PC-9 (cell line): ENCODE measurements at regions of chr13 and their contacts with region 1.

Region 1: GRCh38 chr13:94849254-94849653 is 136.9 kb upstream of the SOX21 start:
- DNase-seq: no peak
- H3K4me3 ChIP-seq: no peak overlapping the region
- H3K27ac ChIP-seq: no peak overlapping the region
- H3K4me1 ChIP-seq: no peaks in the 10 kb centered on the region
- H3K27me3 ChIP-seq: peaks cover 5% of the 10 kb centered on the region; the same call in 1 of the 2 replicates
- CTCF ChIP-seq: no peak

Region 2: GRCh38 chr13:94050686-94051085 is 798.6 kb before region 1 on chr13:
- CTCF ChIA-PET with region 1: no interaction called
- POLR2A ChIA-PET with region 1: no interaction called
- intact Hi-C with region 1: no loop called
- DNase-seq: no peak
- H3K4me3 ChIP-seq: no peak overlapping the region
- H3K27ac ChIP-seq: no peak overlapping the region
- H3K4me1 ChIP-seq: no peaks in the 10 kb centered on the region
- H3K27me3 ChIP-seq: no peaks in the 10 kb centered on the region
- CTCF ChIP-seq: no peak

Region 3: GRCh38 chr13:94886191-94886590 is 36.9 kb after region 1 on chr13:
- CTCF ChIA-PET with region 1: no interaction called
- POLR2A ChIA-PET with region 1: no interaction called
- intact Hi-C with region 1: no loop called
- DNase-seq: no peak
- H3K4me3 ChIP-seq: no peak overlapping the region
- H3K27ac ChIP-seq: no peak overlapping the region
- H3K4me1 ChIP-seq: no peaks in the 10 kb centered on the region
- H3K27me3 ChIP-seq: peaks cover 35% of the 10 kb centered on the region
- CTCF ChIP-seq: no peak

Region 4: DNA sequence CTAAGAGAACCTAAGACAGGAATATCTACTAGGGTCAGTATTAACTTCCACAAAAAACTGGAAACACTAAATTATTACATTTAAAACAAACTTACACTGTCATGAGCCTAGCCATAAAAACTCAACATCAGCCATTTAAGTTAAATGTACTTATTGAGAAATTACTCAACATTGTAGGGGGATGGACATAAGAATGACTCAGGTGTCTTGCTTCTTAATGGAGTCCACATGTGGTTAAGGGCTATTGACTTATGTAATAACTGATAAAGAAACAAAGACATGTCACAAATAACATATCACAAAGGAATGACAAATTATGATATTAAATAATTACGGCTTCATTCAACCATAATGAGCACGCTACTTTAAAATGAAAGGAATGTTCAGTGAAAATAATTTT is 739.5 kb after region 1 on chr13:
- CTCF ChIA-PET with region 1: no interaction called
- POLR2A ChIA-PET with region 1: no interaction called
- intact Hi-C with region 1: no loop called
- DNase-seq: peak in 1 of 2 experiments; percentile 40
- H3K4me3 ChIP-seq: no peak overlapping the region
- H3K27ac ChIP-seq: no peak overlapping the region
- H3K4me1 ChIP-seq: peaks cover 24% of the 10 kb centered on the region
- H3K27me3 ChIP-seq: no peaks in the 10 kb centered on the region
- CTCF ChIP-seq: no peak

Region 5: GRCh38 chr13:95636853-95637252 is 787.6 kb after region 1 on chr13:
- CTCF ChIA-PET with region 1: no interaction called
- POLR2A ChIA-PET with region 1: interaction called, 10 read pairs
- intact Hi-C with region 1: no loop called
- DNase-seq: no peak
- H3K4me3 ChIP-seq: no peak overlapping the region
- H3K27ac ChIP-seq: no peak overlapping the region
- H3K4me1 ChIP-seq: no peaks in the 10 kb centered on the region
- H3K27me3 ChIP-seq: no peaks in the 10 kb centered on the region
- CTCF ChIP-seq: no peak